Heart left ventricle (tissue), 16 donors: ENCODE measurements at regions of chr9 and their contacts with region 1.

Region 1: DNA sequence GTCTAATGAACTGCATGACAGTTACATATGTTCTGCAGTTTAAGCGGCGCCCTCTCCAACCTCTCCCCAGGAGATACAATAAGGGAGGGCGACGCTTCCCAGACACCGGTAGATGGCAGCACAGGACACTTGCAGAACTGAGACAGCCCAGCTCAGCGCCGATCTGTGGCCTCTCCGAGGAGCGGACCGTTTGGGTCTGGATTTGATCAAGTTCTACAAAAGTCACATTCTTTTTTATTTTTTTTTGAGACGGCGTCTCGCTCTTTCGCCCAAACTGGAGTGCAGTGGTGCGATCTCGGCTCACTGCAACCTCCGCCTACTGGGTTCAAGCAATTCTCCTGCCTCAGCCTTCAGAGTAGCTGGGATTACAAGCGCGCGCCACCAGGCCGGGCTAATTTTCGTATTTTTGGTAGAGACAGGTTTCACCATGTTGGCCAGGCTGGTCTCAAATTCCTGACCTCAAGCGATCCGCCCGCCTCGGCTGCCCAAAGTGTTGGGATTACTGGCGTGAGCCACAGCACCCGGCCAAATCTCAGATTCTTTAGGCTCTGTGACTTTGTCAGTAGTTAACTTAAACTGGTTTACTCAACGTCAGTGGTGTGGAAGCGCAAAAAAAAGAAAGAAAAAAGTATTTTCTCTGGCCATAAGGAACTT is 1.4 kb upstream of the ATOSB start:
- DNase-seq: peak; percentile 92 to 95 (median 93)
- ATAC-seq: peak; percentile 74 to 81 (median 76)
- H3K4me3 ChIP-seq: peak overlapping the region in 11 of 12 donors; percentile 49 to 81 (median 65)
- H3K27ac ChIP-seq: peak overlapping the region in 11 of 12 donors; percentile 26 to 98 (median 88)
- H3K4me1 ChIP-seq: peaks cover 0 to 46% (median 34%) of the 10 kb centered on the region in 12 donors
- H3K27me3 ChIP-seq: no peaks in the 10 kb centered on the region
- CTCF ChIP-seq: peak; percentile 93 to 98 (median 95)
- POLR2A ChIP-seq: no peak

Region 2: DNA sequence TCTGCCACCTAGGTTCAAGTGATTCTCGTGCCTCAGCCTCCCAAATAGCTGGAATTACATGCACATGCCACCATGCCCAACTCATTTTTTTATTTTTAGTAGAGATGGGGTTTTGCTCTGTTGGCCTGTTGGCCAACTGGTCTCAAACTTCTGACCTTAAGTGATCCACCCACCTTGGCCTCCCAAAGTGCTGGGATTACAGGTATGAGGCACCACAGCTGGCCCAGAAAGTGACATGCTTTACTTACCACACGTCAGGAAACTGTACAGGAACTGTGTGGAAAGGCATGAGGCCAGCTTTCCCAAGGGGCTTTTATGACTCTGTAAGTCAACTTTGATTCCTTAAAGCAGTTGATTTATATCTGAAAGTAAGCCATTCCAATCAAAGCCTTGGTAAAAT is 102.5 kb before region 1 on chr9:
- intact Hi-C with region 1: no loop called
- DNase-seq: no peak
- ATAC-seq: no peak
- H3K4me3 ChIP-seq: no peak overlapping the region
- H3K27ac ChIP-seq: no peak overlapping the region
- H3K4me1 ChIP-seq: no peaks in the 10 kb centered on the region
- H3K27me3 ChIP-seq: no peaks in the 10 kb centered on the region
- CTCF ChIP-seq: no peak
- POLR2A ChIP-seq: no peak

Region 3: DNA sequence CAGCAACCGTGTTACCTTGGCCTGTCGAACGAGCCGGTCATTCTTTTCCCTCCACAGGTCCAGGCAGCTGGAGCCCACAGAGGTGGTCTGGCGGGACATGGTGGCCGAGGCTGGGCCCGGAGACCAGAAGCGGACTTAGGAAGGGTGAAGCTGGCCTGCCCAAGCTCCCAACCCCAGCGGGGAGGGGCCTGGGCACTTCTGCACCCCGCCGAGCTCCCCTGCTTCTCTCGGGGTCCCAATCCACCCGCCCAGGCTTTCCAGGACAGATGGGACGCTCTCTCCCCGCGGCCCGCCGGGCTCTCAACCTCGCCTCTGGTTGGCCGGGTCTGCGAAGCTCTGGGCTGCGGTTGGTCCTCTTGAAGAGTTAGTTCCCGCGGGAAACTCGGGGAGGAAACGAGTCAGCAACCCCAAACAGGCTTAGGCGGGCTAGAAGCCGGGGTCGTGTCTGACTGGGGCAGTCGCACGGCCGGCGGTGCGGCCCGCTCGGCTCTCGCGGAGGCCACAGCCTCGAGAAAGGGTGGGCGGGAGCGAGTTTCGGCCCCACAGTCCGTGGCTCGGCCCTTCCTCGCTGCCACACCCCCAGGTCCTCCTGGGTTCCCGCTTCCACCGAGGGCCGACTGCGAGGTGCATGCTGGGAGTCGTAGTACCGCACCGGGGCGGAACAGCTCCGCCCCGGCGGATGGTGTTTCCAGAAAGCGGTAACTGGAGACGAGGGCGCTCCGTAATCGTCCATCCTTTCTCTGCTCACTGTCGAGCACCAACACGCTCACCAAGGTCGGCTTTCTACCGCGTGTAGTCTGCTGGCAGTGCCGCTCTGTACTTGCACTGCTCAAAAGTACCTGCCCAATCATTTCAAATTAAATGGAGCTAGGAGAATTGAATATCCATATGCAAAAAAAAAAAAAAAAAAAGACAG is 37.3 kb before region 1 on chr9 and contains the start of gene FANCG:
- intact Hi-C with region 1: no loop called
- DNase-seq: peak; percentile 91 to 94 (median 94)
- ATAC-seq: peak; percentile 92 to 98 (median 98)
- H3K4me3 ChIP-seq: peak within 1 kb of the TSS; percentile 42 to 94 (median 73)
- H3K27ac ChIP-seq: peak within 1 kb of the TSS in 11 of 12 donors; percentile 55 to 85 (median 76)
- H3K4me1 ChIP-seq: peaks cover 2 to 24% (median 13%) of the 10 kb centered on the region in 12 donors
- H3K27me3 ChIP-seq: no peaks in the 10 kb centered on the region
- CTCF ChIP-seq: peak in 1 of 12 donors; percentile 25
- POLR2A ChIP-seq: peak in 1 of 2 donors; percentile 61
- total RNA-seq, gene FANCG: 0.71 to 11.8 (median 2.9) TPM

Region 4: DNA sequence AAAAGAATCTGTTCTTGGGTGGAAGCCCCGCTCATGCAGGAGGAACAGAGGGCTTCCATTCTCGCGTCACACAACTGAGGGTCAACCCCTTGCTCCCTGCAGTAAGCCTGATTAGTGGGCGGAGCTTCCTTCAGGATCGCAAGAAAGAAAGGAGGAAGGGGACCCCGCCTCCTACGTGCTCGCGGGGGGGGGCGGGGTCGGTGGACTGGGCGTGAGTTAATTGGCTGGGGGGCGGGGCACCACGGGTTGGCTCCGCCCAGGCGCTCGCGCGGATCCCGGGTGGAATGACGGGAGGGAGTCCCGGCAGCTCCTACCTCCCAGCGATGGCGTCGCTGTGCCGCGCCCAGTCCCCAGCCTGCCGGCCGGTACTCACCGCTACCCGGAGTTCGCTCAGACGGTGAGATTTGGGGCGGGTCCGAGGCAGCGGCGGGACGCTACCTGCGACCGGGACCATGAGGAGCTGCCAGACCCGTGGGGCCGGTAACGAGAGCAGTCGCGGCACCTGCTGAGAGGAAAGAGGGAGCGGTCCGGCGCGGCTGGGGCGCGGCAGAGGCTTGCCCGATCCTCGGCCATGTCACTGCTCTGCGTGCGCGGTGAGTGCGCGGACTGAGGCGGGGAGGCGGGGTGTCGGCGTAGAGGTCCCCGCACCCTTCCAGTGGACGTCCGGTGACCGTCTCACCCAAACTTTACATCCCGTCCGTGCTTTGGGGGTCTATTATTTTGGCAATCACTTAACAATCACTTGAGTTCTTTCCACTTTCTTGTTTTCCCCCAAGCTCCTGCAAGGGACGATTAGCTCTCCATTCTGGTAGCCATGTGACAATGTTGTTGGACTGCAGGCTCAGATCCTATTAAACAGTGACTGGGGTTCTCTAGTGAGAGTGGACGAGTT is 44.9 kb after region 1 on chr9 and contains the start of gene UNC13B:
- intact Hi-C with region 1: loop called in 6 of 10 experiments (anchors 2 to 10 kb)
- DNase-seq: peak; percentile 95 to 97 (median 96)
- ATAC-seq: peak; percentile 98 to 99 (median 99)
- H3K4me3 ChIP-seq: peak within 1 kb of the TSS; percentile 65 to 93 (median 79)
- H3K27ac ChIP-seq: peak within 1 kb of the TSS; percentile 88 to 99 (median 94)
- H3K4me1 ChIP-seq: peaks cover 0 to 34% (median 21%) of the 10 kb centered on the region in 12 donors
- H3K27me3 ChIP-seq: no peaks in the 10 kb centered on the region
- CTCF ChIP-seq: peak in 5 of 12 donors; percentile 22 to 51 (median 33)
- POLR2A ChIP-seq: peak in 1 of 2 donors; percentile 78
- total RNA-seq, gene UNC13B: 18.0 to 30.2 (median 21.2) TPM

Region 5: DNA sequence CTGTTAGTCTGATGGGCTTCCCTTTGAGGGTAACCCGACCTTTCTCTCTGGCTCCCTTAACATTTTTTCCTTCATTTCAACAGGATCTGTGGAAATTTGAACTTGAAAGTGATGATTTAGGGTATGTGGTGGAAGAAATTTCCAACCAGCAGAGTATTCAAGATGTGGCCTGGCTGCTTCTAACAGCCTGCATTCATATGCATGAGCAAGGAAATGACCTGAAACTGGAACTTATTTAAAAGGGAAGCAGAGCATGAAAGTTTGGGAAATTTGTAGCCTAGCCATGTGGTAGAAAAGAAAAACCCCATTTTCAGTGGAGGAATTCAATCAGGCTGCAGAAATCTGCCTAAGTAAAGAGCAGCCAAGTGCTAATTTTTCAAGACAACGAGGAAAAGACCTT is 86.5 kb after region 1 on chr9:
- intact Hi-C with region 1: no loop called
- DNase-seq: no peak
- ATAC-seq: no peak
- H3K4me3 ChIP-seq: no peak overlapping the region
- H3K27ac ChIP-seq: no peak overlapping the region
- H3K4me1 ChIP-seq: no peaks in the 10 kb centered on the region
- H3K27me3 ChIP-seq: no peaks in the 10 kb centered on the region
- CTCF ChIP-seq: no peak
- POLR2A ChIP-seq: no peak

Region 6: GRCh38 chr9:35258676-35259474 is 141.8 kb after region 1 on chr9:
- intact Hi-C with region 1: loop called (anchors 1 to 5 kb)
- DNase-seq: peak; percentile 62 to 83 (median 68)
- ATAC-seq: peak in 3 of 4 donors; percentile 63 to 83 (median 68)
- H3K4me3 ChIP-seq: no peak overlapping the region
- H3K27ac ChIP-seq: no peak overlapping the region
- H3K4me1 ChIP-seq: peaks cover 0 to 8% (median 0%) of the 10 kb centered on the region in 12 donors
- H3K27me3 ChIP-seq: no peaks in the 10 kb centered on the region
- CTCF ChIP-seq: peak; percentile 50 to 83 (median 73)
- POLR2A ChIP-seq: no peak

Region 7: GRCh38 chr9:35385042-35385441 is 268.0 kb after region 1 on chr9:
- intact Hi-C with region 1: loop called in 5 of 10 experiments (anchors 5 to 10 kb)
- DNase-seq: no peak
- ATAC-seq: peak in 3 of 4 donors; percentile 14 to 45 (median 42)
- H3K4me3 ChIP-seq: no peak overlapping the region
- H3K27ac ChIP-seq: no peak overlapping the region
- H3K4me1 ChIP-seq: peaks cover 0 to 6% (median 0%) of the 10 kb centered on the region in 12 donors
- H3K27me3 ChIP-seq: no peaks in the 10 kb centered on the region
- CTCF ChIP-seq: peak in 7 of 12 donors; percentile 7 to 42 (median 30)
- POLR2A ChIP-seq: no peak

Region 8: GRCh38 chr9:35563791-35564197 is 446.8 kb after region 1 on chr9:
- intact Hi-C with region 1: loop called in 3 of 10 experiments (anchors 10 kb)
- DNase-seq: peak in 3 of 5 donors; percentile 51 to 53 (median 51)
- ATAC-seq: peak; percentile 65 to 79 (median 66)
- H3K4me3 ChIP-seq: peak overlapping the region in 8 of 12 donors; percentile 1 to 42 (median 32)
- H3K27ac ChIP-seq: peak overlapping the region in 11 of 12 donors; percentile 26 to 77 (median 57)
- H3K4me1 ChIP-seq: peaks cover 4 to 34% (median 24%) of the 10 kb centered on the region in 12 donors
- H3K27me3 ChIP-seq: no peaks in the 10 kb centered on the region
- CTCF ChIP-seq: no peak
- POLR2A ChIP-seq: no peak